Activated naive CD4-positive, alpha-beta T cell treated with anti-CD3 and anti-CD28 coated beads, Interleukin-2, amount 10 ng/mL, durations not matched to agents 7 days and 5 days (primary cell): ENCODE measurements at regions of chr10 and their contacts with region 1.

Region 1: DNA sequence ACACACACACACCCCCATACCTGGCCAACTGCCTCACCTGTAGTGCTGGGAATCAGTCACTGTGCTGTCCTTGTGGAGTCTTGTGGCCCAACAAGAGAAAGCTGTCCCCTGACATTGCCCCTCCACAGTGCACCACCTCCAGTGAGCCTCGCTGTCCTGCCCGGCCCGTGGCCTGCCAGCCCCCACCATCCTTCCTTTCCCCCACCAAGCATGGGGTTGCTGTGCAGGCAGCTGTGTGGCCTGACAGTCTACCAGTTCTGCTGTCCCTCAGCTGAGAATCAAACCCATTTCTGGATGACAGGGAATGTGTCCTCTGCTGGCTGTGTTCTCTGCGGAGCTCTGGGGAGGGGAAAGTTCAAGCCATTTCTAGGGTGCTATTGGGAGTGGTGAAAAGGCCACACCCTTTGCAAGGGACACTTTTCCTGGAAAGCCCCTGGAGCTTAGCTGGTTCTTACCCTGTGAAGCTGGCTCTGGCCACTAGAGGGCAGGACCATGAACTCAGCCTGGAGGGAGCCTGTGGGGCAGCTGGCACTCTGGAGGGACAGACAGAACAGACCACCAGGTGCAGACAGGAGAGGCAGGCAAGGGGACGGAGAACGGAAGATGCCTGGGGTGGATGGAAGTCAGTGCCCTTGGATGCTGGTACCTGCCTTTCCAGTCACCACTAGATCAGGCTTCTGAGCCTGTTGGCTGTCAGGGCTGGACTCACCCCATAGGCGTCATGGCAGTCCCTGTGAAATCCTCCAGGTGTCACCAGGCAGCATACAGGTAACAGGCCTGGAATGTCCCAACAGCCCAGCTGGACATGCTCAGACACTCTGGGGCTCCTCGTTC is 10.5 kb upstream of the MTPAP start:
- DNase-seq: peak; percentile 77
- H3K4me3 Mint-ChIP-seq: no peak overlapping the region
- H3K27ac Mint-ChIP-seq: no peak overlapping the region
- H3K4me1 Mint-ChIP-seq: peaks cover 9% of the 10 kb centered on the region
- H3K27me3 Mint-ChIP-seq: peaks cover 38% of the 10 kb centered on the region

Region 2: DNA sequence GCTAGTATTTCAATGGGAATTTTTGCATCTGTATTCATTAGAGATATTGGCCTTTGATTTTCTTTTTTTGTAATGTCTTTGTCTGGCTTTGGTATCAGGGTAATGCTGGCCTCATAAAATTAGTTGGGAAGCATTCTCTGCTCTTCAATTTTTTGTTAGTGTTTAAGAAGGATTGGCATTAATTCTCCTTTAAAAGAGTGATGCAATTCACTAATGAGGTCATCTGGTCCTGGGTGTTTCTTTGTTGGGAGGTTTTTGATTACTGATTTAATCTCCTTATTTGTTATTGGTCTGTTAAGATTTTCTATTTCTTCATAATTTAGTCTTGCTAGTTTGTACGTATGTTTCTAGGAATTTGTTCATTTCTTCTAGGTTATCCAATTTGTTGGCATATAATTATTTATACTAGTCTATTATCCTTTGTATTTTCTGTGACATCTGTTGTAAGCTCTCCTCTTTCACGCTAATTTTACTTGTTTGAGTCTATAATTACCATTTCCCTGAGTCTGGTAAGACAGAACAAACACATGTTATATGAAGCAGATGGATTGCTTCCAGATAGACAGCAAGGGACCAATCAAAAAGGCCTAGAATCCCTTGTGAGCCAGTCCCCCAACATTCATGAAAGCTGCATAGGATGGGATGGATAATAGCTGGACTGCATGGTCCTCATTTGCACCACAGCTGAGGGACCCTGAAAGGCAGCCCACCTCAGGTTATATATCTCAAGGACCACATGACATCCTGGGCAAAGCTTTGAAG is 64.9 kb before region 1 on chr10:
- CTCF ChIA-PET with region 1: no interaction called
- DNase-seq: no peak
- H3K4me3 Mint-ChIP-seq: no peak overlapping the region
- H3K27ac Mint-ChIP-seq: no peak overlapping the region
- H3K4me1 Mint-ChIP-seq: no peaks in the 10 kb centered on the region
- H3K27me3 Mint-ChIP-seq: peaks cover 37% of the 10 kb centered on the region

Region 3: GRCh38 chr10:30374353-30374752 is 14.8 kb after region 1 on chr10:
- CTCF ChIA-PET with region 1: interaction called, 38 read pairs
- DNase-seq: no peak
- H3K4me3 Mint-ChIP-seq: no peak overlapping the region
- H3K27ac Mint-ChIP-seq: no peak overlapping the region
- H3K4me1 Mint-ChIP-seq: peaks cover 36% of the 10 kb centered on the region
- H3K27me3 Mint-ChIP-seq: peaks cover 29% of the 10 kb centered on the region

Region 4: DNA sequence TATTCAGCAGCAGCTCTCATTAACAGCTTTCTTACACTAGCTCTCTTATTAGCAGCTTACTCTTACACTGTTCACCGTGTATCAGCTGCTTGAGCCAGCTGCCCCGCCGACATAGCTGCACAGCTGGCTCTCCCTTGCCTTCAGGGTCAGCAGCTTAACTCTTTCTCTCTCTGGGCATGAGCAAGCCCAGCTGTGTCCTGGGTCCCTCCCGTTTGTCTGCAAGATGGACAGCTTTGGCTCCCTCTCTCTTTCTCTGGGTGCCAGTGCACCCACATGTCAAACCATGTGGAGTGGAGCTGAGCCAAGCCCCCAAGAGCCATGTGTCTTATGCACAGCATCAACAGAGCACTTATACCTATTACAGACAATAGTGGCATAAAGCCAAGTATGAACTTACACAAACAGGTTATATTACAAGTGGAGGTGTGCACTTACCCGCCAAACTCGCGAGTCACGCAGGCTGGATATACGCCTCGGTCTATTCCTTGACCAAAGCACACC is 25.2 kb after region 1 on chr10:
- CTCF ChIA-PET with region 1: interaction called, 68 read pairs
- DNase-seq: peak; percentile 35
- H3K4me3 Mint-ChIP-seq: no peak overlapping the region
- H3K27ac Mint-ChIP-seq: no peak overlapping the region
- H3K4me1 Mint-ChIP-seq: no peaks in the 10 kb centered on the region
- H3K27me3 Mint-ChIP-seq: peaks cover 50% of the 10 kb centered on the region

Region 5: GRCh38 chr10:30427512-30428362 is 68.1 kb after region 1 on chr10:
- CTCF ChIA-PET with region 1: no interaction called
- DNase-seq: peak; percentile 28
- H3K4me3 Mint-ChIP-seq: no peak overlapping the region
- H3K27ac Mint-ChIP-seq: no peak overlapping the region
- H3K4me1 Mint-ChIP-seq: peaks cover 55% of the 10 kb centered on the region
- H3K27me3 Mint-ChIP-seq: peaks cover 2% of the 10 kb centered on the region

Region 6: GRCh38 chr10:30591249-30591670 is 231.7 kb after region 1 on chr10:
- CTCF ChIA-PET with region 1: interaction called, 49 read pairs
- DNase-seq: peak; percentile 55
- H3K4me3 Mint-ChIP-seq: no peak overlapping the region
- H3K27ac Mint-ChIP-seq: no peak overlapping the region
- H3K4me1 Mint-ChIP-seq: no peaks in the 10 kb centered on the region
- H3K27me3 Mint-ChIP-seq: peaks cover 46% of the 10 kb centered on the region